ENCODE measurements at regions of chr15 and their contacts with region 1.

Region 1: GRCh38 chr15:73633111-73633990 is at the start of gene NPTN:
- DNase-seq: peak; percentile 99
- H3K4me3 Mint-ChIP-seq: peak within 1 kb of the TSS; percentile 89
- H3K27ac Mint-ChIP-seq: peak within 1 kb of the TSS; percentile 74
- H3K4me1 Mint-ChIP-seq: peaks cover 54% of the 10 kb centered on the region
- H3K27me3 Mint-ChIP-seq: peaks cover 10% of the 10 kb centered on the region
- total RNA-seq, gene NPTN: 91.1 and 91.2 TPM in 2 replicates

Region 2: GRCh38 chr15:73240866-73241499 is 392.4 kb before region 1 on chr15:
- intact Hi-C with region 1: loop called (anchors 5 kb)
- DNase-seq: peak; percentile 55
- H3K4me3 Mint-ChIP-seq: no peak overlapping the region
- H3K27ac Mint-ChIP-seq: no peak overlapping the region
- H3K4me1 Mint-ChIP-seq: no peaks in the 10 kb centered on the region
- H3K27me3 Mint-ChIP-seq: no peaks in the 10 kb centered on the region

Region 3: DNA sequence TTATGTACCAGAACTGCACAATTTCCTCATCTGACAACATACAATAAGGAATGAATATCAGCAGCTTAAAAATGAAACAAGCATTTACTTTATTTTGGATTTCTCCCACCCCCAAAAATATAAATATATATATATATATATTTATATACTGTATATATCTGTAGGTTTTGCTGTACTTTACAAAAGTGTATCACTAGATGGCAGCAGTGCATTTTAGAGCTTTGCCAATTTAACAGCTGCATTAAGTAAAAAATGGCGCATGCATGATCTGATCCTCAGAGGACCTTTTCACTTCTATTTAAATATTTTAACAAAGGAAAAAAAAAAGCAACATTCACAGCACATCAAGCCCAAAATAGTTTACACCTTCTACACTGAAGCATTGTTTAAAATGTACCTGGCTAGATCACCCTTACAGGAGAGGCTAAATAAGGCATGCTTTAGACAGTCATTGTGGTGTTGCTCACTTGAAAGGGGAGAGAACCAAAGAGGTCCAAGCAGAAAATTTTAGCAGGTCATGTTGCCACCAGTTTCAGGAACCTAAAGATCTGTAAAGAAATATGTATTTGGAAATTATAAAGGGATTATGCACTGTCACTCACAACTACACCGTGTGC is 72.7 kb before region 1 on chr15:
- intact Hi-C with region 1: loop called (anchors 1 kb)
- DNase-seq: no peak
- H3K4me3 Mint-ChIP-seq: no peak overlapping the region
- H3K27ac Mint-ChIP-seq: no peak overlapping the region
- H3K4me1 Mint-ChIP-seq: peaks cover 9% of the 10 kb centered on the region
- H3K27me3 Mint-ChIP-seq: no peaks in the 10 kb centered on the region

Region 4: DNA sequence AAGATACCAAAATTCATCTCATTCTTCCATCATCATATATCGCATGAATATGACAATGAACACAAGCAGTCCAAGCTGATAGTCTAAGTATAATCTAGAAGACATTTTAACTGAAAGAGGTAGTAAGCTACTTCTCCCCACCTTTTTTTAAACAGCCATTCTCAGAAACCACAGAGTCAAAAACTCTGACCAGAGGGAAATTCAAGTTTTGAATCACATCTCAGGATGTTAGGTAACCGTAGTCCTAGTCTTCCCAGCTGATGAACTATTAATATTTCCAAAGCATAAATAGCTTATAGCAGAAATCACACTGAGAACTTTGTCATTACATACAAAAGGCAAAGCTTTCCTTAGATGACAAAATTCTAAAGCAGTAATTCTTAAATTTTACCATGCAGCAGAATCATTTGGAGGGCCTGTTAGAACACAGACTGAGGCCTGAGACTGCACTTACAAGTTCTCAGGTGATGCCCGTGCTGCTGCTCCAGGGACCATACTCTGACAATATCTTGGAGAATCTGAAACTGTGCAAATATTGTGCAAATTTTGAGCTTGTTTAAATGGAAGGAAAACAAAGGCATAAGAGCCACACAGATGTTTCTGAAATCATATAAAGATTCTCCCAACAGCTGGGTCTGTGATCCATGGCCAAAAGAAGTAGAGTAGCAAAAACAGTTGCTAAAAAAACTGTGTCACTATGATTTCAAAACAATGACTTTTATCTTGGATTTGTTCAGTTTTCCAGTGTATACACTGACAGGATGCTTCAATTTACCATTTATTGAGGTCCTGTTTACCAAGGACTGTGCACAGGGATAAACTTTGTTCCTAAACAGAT is 25.7 kb before region 1 on chr15:
- intact Hi-C with region 1: loop called (anchors 1 kb)
- DNase-seq: no peak
- H3K4me3 Mint-ChIP-seq: no peak overlapping the region
- H3K27ac Mint-ChIP-seq: no peak overlapping the region
- H3K4me1 Mint-ChIP-seq: peaks cover 37% of the 10 kb centered on the region
- H3K27me3 Mint-ChIP-seq: no peaks in the 10 kb centered on the region

Region 5: DNA sequence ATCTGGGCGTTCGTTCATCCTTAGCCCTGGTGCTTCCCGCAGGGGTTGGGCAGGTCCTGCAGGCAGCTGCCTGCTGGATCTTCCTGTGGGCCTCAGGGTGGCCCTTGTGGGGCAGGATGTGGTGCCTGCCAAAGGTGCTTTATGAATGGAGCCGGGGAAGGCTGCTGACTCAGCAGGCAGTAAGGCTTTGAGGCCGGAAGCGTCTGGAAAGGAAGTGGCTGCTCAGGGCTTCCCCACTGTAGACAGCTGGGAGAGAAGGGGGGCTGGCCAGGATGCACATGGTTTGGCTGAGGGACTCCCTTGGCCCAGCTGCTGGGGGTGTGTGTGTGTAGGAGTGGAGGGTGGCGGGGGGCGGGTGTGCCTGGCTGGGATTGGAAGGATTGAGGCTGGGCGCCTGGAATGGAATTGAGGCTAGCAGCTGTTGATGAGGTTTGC is 63.7 kb after region 1 on chr15:
- intact Hi-C with region 1: loop called (anchors 1 kb)
- DNase-seq: peak; percentile 84
- H3K4me3 Mint-ChIP-seq: peak overlapping the region; percentile 45
- H3K27ac Mint-ChIP-seq: peak overlapping the region; percentile 64
- H3K4me1 Mint-ChIP-seq: peaks cover 45% of the 10 kb centered on the region
- H3K27me3 Mint-ChIP-seq: peaks cover 56% of the 10 kb centered on the region

Region 6: DNA sequence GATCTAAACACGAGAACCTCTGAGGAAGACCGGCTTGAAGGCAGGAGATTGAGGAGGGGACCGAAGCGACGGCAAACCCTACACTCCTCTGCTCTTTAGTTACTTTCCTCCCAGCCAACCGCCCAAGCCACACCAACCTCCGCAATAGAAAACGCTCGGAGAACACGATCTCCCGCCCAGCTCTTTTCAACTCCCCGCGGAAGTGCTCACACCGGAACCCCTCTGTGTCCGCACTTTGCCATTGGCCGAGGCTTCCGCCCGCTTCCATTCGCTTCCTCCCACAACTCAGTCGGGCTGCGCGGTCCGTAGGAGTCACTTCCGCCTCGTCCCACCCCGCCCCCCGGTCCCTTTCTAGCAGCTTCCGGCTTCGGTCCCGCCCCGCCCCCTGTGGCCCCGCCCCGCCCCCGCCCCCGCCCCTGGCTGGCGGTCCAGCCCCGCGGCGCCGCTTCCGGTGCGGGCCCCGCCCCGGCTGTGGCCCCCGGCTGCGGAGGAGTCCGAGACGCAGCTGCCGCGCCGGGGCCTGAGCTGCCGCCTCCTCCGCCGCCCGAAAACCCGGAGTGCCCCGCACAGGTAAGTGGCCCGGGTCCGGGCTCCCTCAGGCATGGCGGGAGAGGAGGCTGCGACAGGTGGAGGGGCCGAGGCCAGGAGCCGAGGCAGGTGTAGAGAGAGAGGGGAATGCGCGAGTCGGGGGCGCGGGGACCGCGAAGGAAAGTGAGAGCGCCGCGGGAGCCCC is 907.6 kb after region 1 on chr15 and contains the start of gene ARID3B:
- intact Hi-C with region 1: loop called (anchors 5 kb)
- DNase-seq: peak; percentile 91
- H3K4me3 Mint-ChIP-seq: peak within 1 kb of the TSS; percentile 94
- H3K27ac Mint-ChIP-seq: peak within 1 kb of the TSS; percentile 96
- H3K4me1 Mint-ChIP-seq: peaks cover 56% of the 10 kb centered on the region
- H3K27me3 Mint-ChIP-seq: no peaks in the 10 kb centered on the region
- total RNA-seq, gene ARID3B: 48.8 and 53.6 TPM in 2 replicates

Measured in activated T-helper 1 cell treated with anti-CD3 and anti-CD28 coated beads, Interleukin-12 subunit alpha, Interleukin-12 subunit beta, Interleukin-2, Interleukin-4 antibody, amounts not matched to agents 30 ng/mL and 10 ng/mL and 1 ng/mL, durations not matched to agents 14 hours and 24 hours and 36 hours (primary cell).